ENCODE measurements at regions of chr10 and their contacts with region 1.

Region 1: GRCh38 chr10:100980711-100981110 is 6.6 kb downstream of the MRPL43 start:
- DNase-seq: no peak
- H3K4me3 ChIP-seq: no peak overlapping the region
- H3K27ac ChIP-seq: no peak overlapping the region
- H3K4me1 ChIP-seq: no peaks in the 10 kb centered on the region
- H3K27me3 ChIP-seq: no peaks in the 10 kb centered on the region
- CTCF ChIP-seq: no peak

Region 2: GRCh38 chr10:101467286-101467770 is 486.6 kb after region 1 on chr10:
- CTCF ChIA-PET with region 1: no interaction called
- POLR2A ChIA-PET with region 1: interaction called, 17 read pairs
- intact Hi-C with region 1: no loop called
- DNase-seq: peak; percentile 79
- H3K4me3 ChIP-seq: no peak overlapping the region
- H3K27ac ChIP-seq: no peak overlapping the region
- H3K4me1 ChIP-seq: no peaks in the 10 kb centered on the region
- H3K27me3 ChIP-seq: no peaks in the 10 kb centered on the region
- CTCF ChIP-seq: peak; percentile 91